Endothelial cell of umbilical vein (primary cell): ENCODE measurements at regions of chrX and their contacts with region 1.

Region 1: GRCh38 chrX:100768679-100769338 is 36.9 kb upstream of the SYTL4 start:
- DNase-seq: peak; percentile 75
- H3K4me3 ChIP-seq: no peak overlapping the region
- H3K27ac ChIP-seq: no peak overlapping the region
- H3K4me1 ChIP-seq: no peaks in the 10 kb centered on the region
- H3K27me3 ChIP-seq: peaks cover 0 to 6% of the 10 kb centered on the region in 2 experiments
- CTCF ChIP-seq: peak; percentile 84 to 85
- POLR2A ChIP-seq: no peak

Region 2: DNA sequence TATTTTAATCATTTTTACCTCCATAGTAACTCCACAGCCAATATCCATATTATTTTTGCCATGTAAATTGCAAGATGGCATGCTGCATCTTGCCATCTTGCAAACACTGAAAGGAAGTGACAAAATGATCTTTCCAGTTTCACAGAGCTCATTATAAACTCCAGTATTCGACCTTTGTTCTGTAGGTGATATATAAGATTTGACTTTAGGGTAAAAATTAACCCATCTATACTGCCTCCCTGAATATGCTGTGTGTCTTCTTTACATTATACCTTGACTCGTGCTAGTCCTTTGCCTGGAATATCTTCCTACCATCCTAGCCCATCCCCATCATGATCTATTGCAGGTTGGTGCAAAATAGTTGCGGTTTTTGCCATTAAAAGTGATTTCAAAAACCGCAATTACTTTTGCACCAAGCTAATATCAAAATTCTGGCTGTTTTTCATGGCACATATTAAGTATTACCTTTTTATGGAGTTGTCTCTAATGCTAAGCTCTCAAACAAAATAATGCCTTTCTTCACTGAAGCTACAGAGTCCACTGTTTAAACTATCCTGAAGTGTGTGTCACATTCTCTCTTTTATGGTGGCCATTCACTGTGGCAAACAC is 519.8 kb before region 1 on chrX:
- CTCF ChIA-PET with region 1: no interaction called
- POLR2A ChIA-PET with region 1: no interaction called
- dilution Hi-C with region 1: no loop called
- intact Hi-C with region 1: no loop called
- DNase-seq: no peak
- H3K4me3 ChIP-seq: no peak overlapping the region
- H3K27ac ChIP-seq: no peak overlapping the region
- H3K4me1 ChIP-seq: no peaks in the 10 kb centered on the region
- H3K27me3 ChIP-seq: no peaks in the 10 kb centered on the region
- CTCF ChIP-seq: no peak
- POLR2A ChIP-seq: no peak

Region 3: DNA sequence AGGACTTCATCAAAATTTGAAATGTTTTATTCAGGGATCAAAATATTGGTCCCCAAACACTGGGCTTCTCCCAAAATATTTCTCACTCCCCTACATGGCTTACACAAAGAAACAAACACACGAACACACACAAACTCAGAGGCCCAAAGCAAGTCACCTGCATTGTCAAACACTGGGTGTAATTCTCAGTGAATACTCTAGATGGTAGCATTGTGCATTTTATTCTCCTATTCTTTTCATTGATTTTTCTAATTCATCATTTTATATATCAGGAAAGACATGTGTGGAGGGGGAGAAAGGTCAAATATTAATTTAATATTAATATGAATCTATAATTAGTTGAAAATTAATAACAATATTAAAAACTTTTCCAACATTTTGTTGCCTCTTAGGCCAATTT is 256.3 kb before region 1 on chrX:
- CTCF ChIA-PET with region 1: interaction called, 30 read pairs
- POLR2A ChIA-PET with region 1: no interaction called
- dilution Hi-C with region 1: no loop called
- intact Hi-C with region 1: loop called (anchors 1 kb)
- DNase-seq: peak; percentile 9
- H3K4me3 ChIP-seq: no peak overlapping the region
- H3K27ac ChIP-seq: no peak overlapping the region
- H3K4me1 ChIP-seq: no peaks in the 10 kb centered on the region
- H3K27me3 ChIP-seq: no peaks in the 10 kb centered on the region
- CTCF ChIP-seq: peak; percentile 8 to 16
- POLR2A ChIP-seq: no peak

Region 4: DNA sequence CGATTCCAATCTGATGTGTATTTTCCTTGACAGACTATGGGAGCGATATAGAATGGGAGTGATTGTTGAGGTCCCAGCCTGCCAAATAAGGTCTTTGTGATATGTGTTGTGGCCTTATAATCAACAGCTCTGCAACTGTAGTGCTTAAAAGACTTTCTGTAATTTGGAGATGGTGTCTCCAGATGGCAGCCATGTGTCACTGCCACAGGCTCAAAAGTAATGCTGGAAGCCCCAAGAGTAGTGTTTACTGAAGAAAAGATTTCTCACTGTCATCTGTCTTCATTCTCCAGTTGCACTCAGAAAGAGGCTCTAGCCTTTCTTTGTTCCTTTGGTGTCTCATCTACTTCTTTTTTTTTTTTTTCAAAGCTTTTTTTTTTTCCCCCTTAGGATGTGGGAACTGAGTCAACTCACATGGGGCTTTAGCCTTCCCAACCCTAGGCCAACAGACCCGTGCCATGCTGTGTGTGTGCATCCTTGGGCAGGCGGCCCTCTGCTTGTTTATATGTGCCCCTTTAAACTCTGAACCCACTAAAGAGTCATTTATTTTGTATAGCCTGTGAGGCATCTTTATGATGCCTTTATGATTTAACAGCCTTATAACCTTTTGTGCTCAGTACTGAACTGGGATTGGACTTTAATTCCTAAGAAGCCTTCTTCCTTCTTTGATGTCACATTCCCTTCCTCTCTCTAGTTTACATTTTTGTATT is 109.2 kb before region 1 on chrX:
- CTCF ChIA-PET with region 1: interaction called, 10 read pairs
- POLR2A ChIA-PET with region 1: no interaction called
- dilution Hi-C with region 1: no loop called
- intact Hi-C with region 1: no loop called
- DNase-seq: no peak
- H3K4me3 ChIP-seq: no peak overlapping the region
- H3K27ac ChIP-seq: peak overlapping the region; percentile 81
- H3K4me1 ChIP-seq: peaks cover 36% of the 10 kb centered on the region
- H3K27me3 ChIP-seq: no peaks in the 10 kb centered on the region
- CTCF ChIP-seq: no peak
- POLR2A ChIP-seq: no peak

Region 5: GRCh38 chrX:100685284-100685996 is 83.4 kb before region 1 on chrX:
- CTCF ChIA-PET with region 1: interaction called, 374 read pairs
- POLR2A ChIA-PET with region 1: no interaction called
- dilution Hi-C with region 1: no loop called
- intact Hi-C with region 1: loop called (anchors 1 kb)
- DNase-seq: peak; percentile 84
- H3K4me3 ChIP-seq: no peak overlapping the region
- H3K27ac ChIP-seq: peak overlapping the region; percentile 47
- H3K4me1 ChIP-seq: peaks cover 17% of the 10 kb centered on the region
- H3K27me3 ChIP-seq: no peaks in the 10 kb centered on the region
- CTCF ChIP-seq: peak; percentile 59 to 69
- POLR2A ChIP-seq: no peak

Region 6: DNA sequence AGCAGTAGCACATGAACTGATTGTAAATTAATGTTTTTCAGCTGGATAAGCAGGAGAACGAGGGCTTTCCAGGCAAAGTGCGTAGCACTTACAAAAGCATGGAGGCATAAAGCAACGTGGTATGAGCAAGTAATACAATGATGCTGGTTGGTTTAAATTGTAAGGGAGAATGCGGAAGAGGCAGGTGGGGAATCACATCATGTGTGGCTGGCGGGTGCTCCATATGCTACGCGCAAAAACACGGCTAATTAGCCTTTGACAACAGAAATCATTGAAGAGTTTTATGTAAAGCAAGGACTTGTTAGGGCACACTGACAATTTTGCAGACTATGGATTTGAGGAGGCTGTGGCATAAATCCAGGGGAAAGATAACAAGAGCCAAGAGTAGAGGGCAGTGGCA is 51.4 kb before region 1 on chrX:
- CTCF ChIA-PET with region 1: interaction called, 19 read pairs
- POLR2A ChIA-PET with region 1: no interaction called
- dilution Hi-C with region 1: no loop called
- intact Hi-C with region 1: no loop called
- DNase-seq: no peak
- H3K4me3 ChIP-seq: no peak overlapping the region
- H3K27ac ChIP-seq: no peak overlapping the region
- H3K4me1 ChIP-seq: no peaks in the 10 kb centered on the region
- H3K27me3 ChIP-seq: no peaks in the 10 kb centered on the region
- CTCF ChIP-seq: no peak
- POLR2A ChIP-seq: no peak

Region 7: DNA sequence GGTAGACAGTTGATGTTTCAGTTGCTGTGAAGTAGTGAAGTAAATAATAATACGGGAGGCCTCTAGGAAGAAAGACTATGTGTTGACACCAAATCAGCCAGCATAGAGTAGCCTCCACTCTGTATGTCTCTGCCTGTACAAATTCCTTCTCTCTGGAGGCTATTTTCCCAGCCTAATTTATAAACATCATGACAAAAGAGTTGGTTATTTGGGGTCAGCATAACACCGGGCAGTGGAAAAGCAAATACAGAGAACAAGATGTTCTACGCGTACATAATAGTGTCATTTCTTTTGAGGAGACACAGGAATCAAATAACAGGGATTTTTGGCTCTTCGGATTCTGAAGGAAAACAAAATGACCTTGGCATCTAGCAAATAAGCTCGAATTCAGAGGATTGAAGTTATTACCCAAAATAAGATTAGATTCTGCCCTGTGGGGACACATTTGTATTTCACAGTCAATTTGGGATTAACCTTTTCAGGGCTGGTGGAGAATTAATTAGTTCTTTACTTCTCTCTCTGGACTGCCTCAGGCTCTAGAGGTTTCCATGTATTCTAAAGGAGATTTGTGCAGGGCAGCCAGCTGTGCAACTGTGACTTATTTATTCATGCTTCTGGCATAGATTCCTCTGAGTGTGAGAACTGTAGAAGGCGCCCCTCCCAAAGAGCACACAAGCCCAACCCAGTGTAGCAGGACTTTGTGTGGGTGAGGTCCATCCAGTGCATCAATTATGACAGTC is 22.8 kb before region 1 on chrX:
- CTCF ChIA-PET with region 1: interaction called, 20 read pairs
- POLR2A ChIA-PET with region 1: no interaction called
- dilution Hi-C with region 1: no loop called
- intact Hi-C with region 1: no loop called
- DNase-seq: peak; percentile 49
- H3K4me3 ChIP-seq: no peak overlapping the region
- H3K27ac ChIP-seq: peak overlapping the region; percentile 78
- H3K4me1 ChIP-seq: peaks cover 39% of the 10 kb centered on the region
- H3K27me3 ChIP-seq: no peaks in the 10 kb centered on the region
- CTCF ChIP-seq: no peak
- POLR2A ChIP-seq: no peak

Region 8: GRCh38 chrX:101260431-101260830 is 491.6 kb after region 1 on chrX:
- CTCF ChIA-PET with region 1: no interaction called
- POLR2A ChIA-PET with region 1: no interaction called
- dilution Hi-C with region 1: no loop called
- intact Hi-C with region 1: no loop called
- DNase-seq: peak; percentile 1
- H3K4me3 ChIP-seq: no peak overlapping the region
- H3K27ac ChIP-seq: no peak overlapping the region
- H3K4me1 ChIP-seq: no peaks in the 10 kb centered on the region
- H3K27me3 ChIP-seq: no peaks in the 10 kb centered on the region
- CTCF ChIP-seq: peak; percentile 20 to 42
- POLR2A ChIP-seq: no peak